ENCODE measurements at regions of chr4 and their contacts with region 1.

Region 1: DNA sequence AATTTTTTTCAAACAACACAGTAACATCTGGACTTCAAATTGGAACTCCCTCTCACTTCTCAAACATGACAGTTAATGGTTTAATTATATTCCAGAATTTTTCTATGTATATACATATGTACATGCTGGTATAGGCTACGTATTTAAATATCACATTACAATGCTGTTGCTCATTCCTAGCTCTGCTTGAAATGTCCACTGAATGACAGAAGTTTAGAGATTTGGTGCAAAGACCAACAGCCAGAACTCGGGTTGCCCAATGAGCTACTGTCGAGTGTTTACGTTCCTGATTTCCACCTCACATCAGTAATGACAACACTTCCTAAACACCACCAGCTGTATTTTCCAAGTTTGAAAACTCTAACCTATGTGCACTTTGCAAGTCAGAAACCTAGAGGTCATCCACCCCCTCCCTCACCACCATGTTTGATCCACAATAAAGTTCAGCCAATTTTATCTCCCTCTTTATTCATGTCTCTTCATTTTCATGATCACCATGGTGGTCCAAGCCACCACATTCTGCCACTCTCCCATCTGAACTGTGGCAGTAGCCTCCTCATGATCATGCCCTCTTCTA is 49.3 kb upstream of the RPL34 start:
- ATAC-seq: peak in 3 of 8 experiments; percentile 50 to 89 (median 51)
- H3K4me3 ChIP-seq: no peak overlapping the region
- H3K27ac ChIP-seq: no peak overlapping the region
- H3K4me1 ChIP-seq: no peaks in the 10 kb centered on the region

Region 2: DNA sequence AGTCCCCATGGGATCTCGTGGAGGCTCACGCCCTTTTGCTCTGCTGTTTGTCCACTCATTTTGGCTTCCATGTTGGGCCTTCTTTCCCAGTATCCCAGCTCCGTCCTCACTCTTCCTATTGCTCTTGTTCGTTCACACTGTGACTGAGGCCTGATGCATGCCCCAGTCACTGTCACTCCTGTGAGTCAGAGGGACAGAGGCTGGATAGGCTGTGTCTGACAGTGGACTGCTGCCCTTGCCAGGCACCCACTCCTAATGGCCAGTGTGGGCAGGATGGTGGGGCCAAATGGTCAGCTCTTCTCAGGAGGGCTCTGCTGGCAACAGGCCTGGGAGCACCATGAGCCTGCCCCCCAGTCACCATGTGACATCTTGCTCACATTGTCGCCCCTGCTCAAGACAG is 541.4 kb before region 1 on chr4:
- in situ Hi-C with region 1: loop called in 5 of 9 experiments (anchors 10 to 25 kb)
- ATAC-seq: peak in 2 of 8 experiments; percentile 15 to 27
- H3K4me3 ChIP-seq: no peak overlapping the region
- H3K27ac ChIP-seq: no peak overlapping the region
- H3K4me1 ChIP-seq: no peaks in the 10 kb centered on the region

Region 3: GRCh38 chr4:108399610-108400265 is 171.3 kb before region 1 on chr4:
- in situ Hi-C with region 1: no loop called
- ATAC-seq: no peak
- H3K4me3 ChIP-seq: no peak overlapping the region
- H3K27ac ChIP-seq: no peak overlapping the region
- H3K4me1 ChIP-seq: no peaks in the 10 kb centered on the region

Measured in motor neuron (in vitro differentiated cells).